Activated CD8-positive, alpha-beta T cell treated with anti-CD3 and anti-CD28 coated beads for 36 hours (primary cell): ENCODE measurements at regions of chr1 and their contacts with region 1.

Region 1: GRCh38 chr1:78617615-78618026 is 2.6 kb upstream of the IFI44L start:
- DNase-seq: peak; percentile 58
- ATAC-seq: peak; percentile 66
- H3K4me3 Mint-ChIP-seq: no peak overlapping the region
- H3K27ac Mint-ChIP-seq: no peak overlapping the region
- H3K4me1 Mint-ChIP-seq: peaks cover 39% of the 10 kb centered on the region
- H3K27me3 Mint-ChIP-seq: no peaks in the 10 kb centered on the region
- CTCF ChIP-seq: peak; percentile 85

Region 2: DNA sequence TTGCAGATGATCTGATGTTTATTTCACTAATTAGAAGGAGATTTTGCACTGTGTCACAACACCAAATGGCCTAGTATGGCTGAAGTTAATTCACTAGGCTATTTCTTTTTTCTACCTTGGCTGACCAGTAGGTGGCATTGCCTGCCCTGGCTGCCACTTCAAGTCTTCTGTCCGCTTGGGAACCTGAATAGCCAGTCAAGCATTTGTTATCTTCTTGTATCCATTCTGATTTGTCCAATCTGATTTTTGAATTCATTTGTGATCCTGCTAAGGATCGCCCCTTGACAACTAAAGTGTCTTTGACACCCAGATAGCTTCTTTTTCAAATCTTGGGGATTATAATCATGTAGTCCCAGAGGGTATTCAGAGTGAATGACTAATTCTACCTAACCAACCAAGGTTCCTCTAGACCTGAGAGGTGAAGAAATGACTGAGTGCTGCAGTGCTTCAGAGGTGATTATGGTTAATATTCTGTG is 472.5 kb before region 1 on chr1:
- CTCF ChIA-PET with region 1: interaction called, 5 read pairs
- POLR2A ChIA-PET with region 1: no interaction called
- intact Hi-C with region 1: loop called (anchors 5 kb)
- DNase-seq: peak; percentile 62
- ATAC-seq: peak; percentile 81
- H3K4me3 Mint-ChIP-seq: no peak overlapping the region
- H3K27ac Mint-ChIP-seq: no peak overlapping the region
- H3K4me1 Mint-ChIP-seq: peaks cover 17% of the 10 kb centered on the region
- H3K27me3 Mint-ChIP-seq: peaks cover 4% of the 10 kb centered on the region
- CTCF ChIP-seq: peak; percentile 87

Region 3: DNA sequence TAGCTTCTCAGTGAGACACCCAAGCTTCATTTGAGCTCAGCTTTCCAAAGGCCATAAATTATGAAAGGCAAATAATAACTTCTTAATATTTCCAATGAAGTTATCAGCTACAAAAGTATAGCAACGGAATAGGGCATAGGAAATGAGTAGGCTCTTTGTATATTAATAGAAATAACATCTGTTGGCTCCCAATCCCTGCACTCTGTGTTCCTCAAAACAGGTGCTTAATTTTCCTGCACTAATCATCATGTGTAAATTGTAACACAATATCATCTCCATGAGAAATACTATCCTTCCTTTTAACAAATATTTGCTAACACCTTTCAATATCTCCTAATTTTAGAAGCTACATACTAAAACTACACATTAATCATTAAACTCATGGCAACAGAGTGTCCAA is 16.6 kb before region 1 on chr1:
- CTCF ChIA-PET with region 1: interaction called, 28 read pairs
- POLR2A ChIA-PET with region 1: no interaction called
- intact Hi-C with region 1: no loop called
- DNase-seq: no peak
- ATAC-seq: no peak
- H3K4me3 Mint-ChIP-seq: no peak overlapping the region
- H3K27ac Mint-ChIP-seq: no peak overlapping the region
- H3K4me1 Mint-ChIP-seq: no peaks in the 10 kb centered on the region
- H3K27me3 Mint-ChIP-seq: peaks cover 2% of the 10 kb centered on the region
- CTCF ChIP-seq: no peak

Region 4: DNA sequence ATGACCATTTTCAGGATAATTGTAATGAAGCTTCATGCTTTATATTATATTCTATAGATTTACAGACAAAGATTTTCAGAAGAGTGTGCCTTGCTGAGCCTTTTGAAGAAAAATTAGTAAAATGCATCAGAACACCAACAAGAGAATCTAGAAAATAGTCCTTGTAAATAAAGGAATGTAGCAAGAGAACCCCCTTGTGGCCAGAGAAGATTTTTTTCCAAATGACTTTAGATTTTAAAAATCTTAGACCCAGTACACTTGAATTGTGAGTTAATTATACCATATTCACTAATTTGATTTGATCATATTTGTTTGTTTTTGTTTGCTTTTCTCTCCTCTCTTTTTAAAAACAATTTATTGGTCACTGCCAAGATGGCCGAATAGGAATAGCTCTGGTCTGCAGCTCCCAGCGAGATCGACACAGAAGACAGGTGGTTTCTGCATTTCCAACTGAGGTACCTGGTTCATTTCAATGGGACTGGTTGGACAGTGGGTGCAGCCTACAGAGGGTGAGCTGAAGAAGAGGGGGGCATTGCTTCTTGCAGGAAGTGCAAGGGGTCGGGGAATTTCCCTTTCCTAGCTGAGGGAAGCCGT is 10.2 kb before region 1 on chr1:
- CTCF ChIA-PET with region 1: interaction called, 28 read pairs
- POLR2A ChIA-PET with region 1: no interaction called
- intact Hi-C with region 1: no loop called
- DNase-seq: no peak
- ATAC-seq: no peak
- H3K4me3 Mint-ChIP-seq: no peak overlapping the region
- H3K27ac Mint-ChIP-seq: no peak overlapping the region
- H3K4me1 Mint-ChIP-seq: no peaks in the 10 kb centered on the region
- H3K27me3 Mint-ChIP-seq: peaks cover 3% of the 10 kb centered on the region
- CTCF ChIP-seq: peak; percentile 62

Region 5: GRCh38 chr1:78649628-78650027 is 32.0 kb after region 1 on chr1 and contains the start of gene IFI44:
- CTCF ChIA-PET with region 1: interaction called, 8 read pairs
- POLR2A ChIA-PET with region 1: interaction called, 3 read pairs
- intact Hi-C with region 1: loop called (anchors 2 kb)
- DNase-seq: peak; percentile 89
- ATAC-seq: peak; percentile 87
- H3K4me3 Mint-ChIP-seq: peak within 1 kb of the TSS; percentile 86
- H3K27ac Mint-ChIP-seq: peak within 1 kb of the TSS; percentile 86
- H3K4me1 Mint-ChIP-seq: peaks cover 55% of the 10 kb centered on the region
- H3K27me3 Mint-ChIP-seq: no peaks in the 10 kb centered on the region
- CTCF ChIP-seq: no peak
- total RNA-seq, gene IFI44: 37.2 to 38.4 TPM

Region 6: DNA sequence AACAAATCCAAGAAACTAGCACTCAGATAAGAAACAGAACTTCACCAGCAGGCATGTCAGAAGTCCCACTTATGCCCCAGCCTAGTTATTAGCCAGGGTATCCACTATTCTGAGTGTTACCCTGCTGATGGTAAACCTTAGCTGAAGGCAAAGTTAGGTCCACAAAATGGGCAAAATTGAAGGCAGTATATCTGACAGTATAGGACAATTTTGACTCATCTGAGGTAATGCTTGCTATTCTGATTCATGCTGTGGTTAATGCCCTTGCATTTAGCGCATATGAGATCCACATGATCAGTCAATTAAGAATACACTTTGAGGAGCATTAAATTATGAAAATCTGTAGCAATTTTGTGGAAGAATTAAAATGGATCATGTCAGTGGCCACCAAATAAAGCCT is 47.1 kb after region 1 on chr1:
- CTCF ChIA-PET with region 1: interaction called, 50 read pairs
- POLR2A ChIA-PET with region 1: no interaction called
- intact Hi-C with region 1: no loop called
- DNase-seq: no peak
- ATAC-seq: peak; percentile 76
- H3K4me3 Mint-ChIP-seq: no peak overlapping the region
- H3K27ac Mint-ChIP-seq: no peak overlapping the region
- H3K4me1 Mint-ChIP-seq: no peaks in the 10 kb centered on the region
- H3K27me3 Mint-ChIP-seq: no peaks in the 10 kb centered on the region
- CTCF ChIP-seq: no peak

Region 7: DNA sequence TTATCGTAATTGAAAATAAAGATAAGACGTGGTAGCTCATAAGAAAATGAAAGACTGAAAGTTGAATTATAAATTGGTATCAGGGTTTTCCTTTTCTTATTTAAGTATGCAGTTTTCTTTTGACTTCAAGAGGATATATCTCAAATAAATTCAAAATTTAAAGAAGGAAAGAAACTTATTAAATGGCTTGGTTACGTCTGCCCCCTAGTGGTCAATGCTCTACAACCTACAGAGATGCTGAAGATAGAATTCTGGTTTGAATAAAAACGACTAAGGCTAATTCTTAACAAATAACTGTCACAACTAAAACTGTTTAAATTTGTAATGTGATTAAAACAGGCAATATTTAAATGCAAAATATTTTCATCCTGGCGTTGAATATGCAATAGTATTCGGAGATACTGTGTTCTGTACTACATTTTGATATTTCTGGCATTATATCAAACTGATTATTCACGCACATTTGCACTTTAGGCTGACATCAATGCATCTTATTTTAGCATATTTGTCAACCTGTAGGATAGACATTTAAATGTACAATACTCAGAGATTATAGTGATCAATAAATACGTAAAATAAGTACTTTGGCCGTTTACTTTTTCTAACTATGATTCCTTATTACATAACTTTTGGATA is 58.8 kb after region 1 on chr1:
- CTCF ChIA-PET with region 1: interaction called, 89 read pairs
- POLR2A ChIA-PET with region 1: interaction called, 5 read pairs
- intact Hi-C with region 1: loop called (anchors 1 kb)
- DNase-seq: peak; percentile 77
- ATAC-seq: peak; percentile 34
- H3K4me3 Mint-ChIP-seq: no peak overlapping the region
- H3K27ac Mint-ChIP-seq: no peak overlapping the region
- H3K4me1 Mint-ChIP-seq: peaks cover 4% of the 10 kb centered on the region
- H3K27me3 Mint-ChIP-seq: peaks cover 4% of the 10 kb centered on the region
- CTCF ChIP-seq: peak; percentile 83